Activated naive CD4-positive, alpha-beta T cell treated with anti-CD3 and anti-CD28 coated beads for 36 hours (primary cell): ENCODE measurements at regions of chr5 and their contacts with region 1.

Region 1: GRCh38 chr5:43227655-43228054 is 35.6 kb downstream of the NIM1K start:
- DNase-seq: no peak
- H3K4me3 Mint-ChIP-seq: no peak overlapping the region
- H3K27ac Mint-ChIP-seq: no peak overlapping the region
- H3K4me1 Mint-ChIP-seq: no peaks in the 10 kb centered on the region
- H3K27me3 Mint-ChIP-seq: no peaks in the 10 kb centered on the region

Region 2: DNA sequence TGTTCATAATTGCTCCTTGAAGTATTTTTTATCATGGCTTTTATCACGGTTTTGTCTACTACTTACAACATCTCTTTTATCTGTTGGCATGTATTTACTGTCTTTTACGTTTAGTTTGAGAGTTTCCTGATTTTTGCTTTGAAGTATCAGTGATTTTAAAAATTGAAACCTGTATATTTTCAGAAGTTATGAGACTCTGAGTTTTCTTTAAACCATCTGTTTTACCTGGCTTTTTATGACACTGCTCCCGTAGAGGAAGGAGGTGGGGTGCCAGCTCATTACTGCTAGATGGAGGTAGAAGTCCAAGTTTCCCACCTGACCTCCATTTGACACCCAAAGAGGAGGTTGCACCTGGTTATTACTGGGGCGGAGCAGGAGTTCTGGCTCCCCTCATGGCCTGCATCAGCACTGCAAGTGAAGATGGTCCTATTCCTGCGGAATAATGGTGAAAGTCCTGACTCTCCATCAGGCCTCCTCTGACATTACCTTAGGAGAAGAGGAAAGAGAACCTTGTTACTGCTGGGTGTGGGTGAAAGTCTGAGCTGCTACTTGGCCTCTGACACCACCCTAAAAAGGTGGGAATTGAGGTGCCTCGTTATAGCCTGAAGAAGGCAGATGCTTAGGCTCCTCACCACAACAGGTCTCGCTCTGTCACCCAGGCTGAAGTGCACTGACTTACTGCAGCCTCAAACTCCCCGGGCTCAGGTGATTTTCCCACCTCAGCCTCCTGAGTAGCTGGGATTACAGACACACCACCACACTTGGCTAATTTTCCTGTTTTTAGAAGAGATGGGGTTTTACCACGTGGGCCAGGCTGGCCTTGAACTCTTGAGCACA is 116.8 kb before region 1 on chr5:
- CTCF ChIA-PET with region 1: interaction called, 3 read pairs
- intact Hi-C with region 1: loop called (anchors 2 kb)
- DNase-seq: peak; percentile 81
- H3K4me3 Mint-ChIP-seq: no peak overlapping the region
- H3K27ac Mint-ChIP-seq: peak overlapping the region; percentile 71
- H3K4me1 Mint-ChIP-seq: peaks cover 43% of the 10 kb centered on the region
- H3K27me3 Mint-ChIP-seq: no peaks in the 10 kb centered on the region